GM12878 (cell line): ENCODE measurements at regions of chr2 and their contacts with region 1.

Region 1: GRCh38 chr2:47180531-47180930 is 25.4 kb upstream of the STPG4 start:
- DNase-seq: no peak
- ATAC-seq: no peak
- H3K4me3 ChIP-seq: no peak overlapping the region
- H3K27ac ChIP-seq: no peak overlapping the region
- H3K4me1 ChIP-seq: peaks cover 7% of the 10 kb centered on the region; the same call in 1 of the 2 replicates
- H3K27me3 ChIP-seq: no peaks in the 10 kb centered on the region
- CTCF ChIP-seq: no peak
- EP300 ChIP-seq: no peak
- POLR2A ChIP-seq: no peak
- RAD21 ChIP-seq: no peak

Region 2: DNA sequence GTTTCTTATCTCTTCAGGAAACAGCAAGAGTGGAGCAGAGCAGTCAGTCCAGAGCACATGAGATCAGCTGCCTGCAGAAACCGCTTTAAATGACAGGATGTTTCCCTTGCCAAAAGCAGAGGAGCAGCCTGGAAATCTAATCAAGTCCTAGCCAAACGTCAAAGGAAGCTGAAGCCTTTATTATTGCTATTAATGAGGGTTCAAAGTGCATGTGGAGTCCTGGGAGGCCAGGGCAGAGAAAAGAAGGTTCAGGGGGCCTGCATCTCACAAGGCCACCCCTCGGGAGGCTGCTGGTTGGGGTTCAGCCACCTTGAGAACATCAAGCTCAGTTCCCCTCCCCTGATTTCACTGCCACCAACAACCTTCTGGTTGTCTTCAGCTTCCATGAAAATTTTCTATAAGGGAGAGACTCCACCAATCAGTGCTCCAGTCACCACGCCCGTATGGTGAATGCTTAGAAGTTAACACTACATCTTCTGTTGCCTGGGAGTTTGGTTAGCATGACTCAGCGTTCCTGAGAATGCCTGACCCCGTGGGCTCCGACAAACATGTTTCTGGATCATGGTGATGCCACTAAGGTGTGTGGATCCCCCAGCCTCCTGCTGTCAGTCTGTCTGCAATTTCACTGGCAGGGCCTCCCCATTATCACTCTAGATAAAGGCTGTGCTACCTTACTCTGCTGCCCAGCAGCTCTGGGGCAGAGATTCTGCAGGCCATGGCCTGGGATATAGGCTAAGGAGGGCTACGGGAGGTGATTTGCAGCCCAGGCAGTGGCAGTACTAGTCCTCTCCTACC is 91.7 kb before region 1 on chr2:
- CTCF ChIA-PET with region 1: no interaction called
- POLR2A ChIA-PET with region 1: no interaction called
- RAD21 ChIA-PET with region 1: no interaction called
- SMC1A ChIA-PET with region 1: no interaction called
- in situ Hi-C with region 1: no loop called
- intact Hi-C with region 1: no loop called
- DNase-seq: no peak
- ATAC-seq: no peak
- H3K4me3 ChIP-seq: no peak overlapping the region
- H3K27ac ChIP-seq: no peak overlapping the region
- H3K4me1 ChIP-seq: no peaks in the 10 kb centered on the region
- H3K27me3 ChIP-seq: no peaks in the 10 kb centered on the region
- CTCF ChIP-seq: no peak
- EP300 ChIP-seq: no peak
- POLR2A ChIP-seq: no peak
- RAD21 ChIP-seq: no peak

Region 3: DNA sequence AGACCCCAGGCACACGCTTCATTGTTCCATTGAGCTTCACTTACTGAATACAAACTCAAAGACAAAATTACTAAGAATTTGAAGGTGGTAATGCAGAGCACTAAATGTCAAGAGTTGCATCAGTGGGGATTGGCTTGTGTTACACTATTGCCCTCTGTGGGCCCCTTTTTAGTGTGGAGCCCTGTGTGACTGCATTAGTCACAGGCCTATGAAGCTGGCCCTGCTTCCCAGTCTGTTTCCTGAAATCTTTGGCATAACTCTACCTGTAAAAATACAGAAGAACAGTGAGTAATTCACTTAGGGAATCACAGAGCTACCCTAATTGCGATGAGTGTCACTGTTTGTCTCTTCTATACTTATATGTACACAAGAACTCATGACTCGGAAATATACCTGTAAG is 14.6 kb after region 1 on chr2:
- CTCF ChIA-PET with region 1: interaction called, 5 read pairs
- POLR2A ChIA-PET with region 1: interaction called, 5 read pairs
- RAD21 ChIA-PET with region 1: interaction called, 3 read pairs
- SMC1A ChIA-PET with region 1: interaction called, 15 read pairs
- in situ Hi-C with region 1: no loop called
- intact Hi-C with region 1: no loop called
- DNase-seq: no peak
- ATAC-seq: no peak
- H3K4me3 ChIP-seq: no peak overlapping the region
- H3K27ac ChIP-seq: no peak overlapping the region
- H3K4me1 ChIP-seq: no peaks in the 10 kb centered on the region
- H3K27me3 ChIP-seq: no peaks in the 10 kb centered on the region; a peak in 1 of 4 replicates
- CTCF ChIP-seq: no peak
- EP300 ChIP-seq: no peak
- POLR2A ChIP-seq: no peak
- RAD21 ChIP-seq: no peak